HEK293T (cell line): ENCODE measurements at regions of chr1 and their contacts with region 1.

Region 1: GRCh38 chr1:45550401-45551351 is at the start of gene AKR1A1:
- DNase-seq: peak; percentile 90

Region 2: DNA sequence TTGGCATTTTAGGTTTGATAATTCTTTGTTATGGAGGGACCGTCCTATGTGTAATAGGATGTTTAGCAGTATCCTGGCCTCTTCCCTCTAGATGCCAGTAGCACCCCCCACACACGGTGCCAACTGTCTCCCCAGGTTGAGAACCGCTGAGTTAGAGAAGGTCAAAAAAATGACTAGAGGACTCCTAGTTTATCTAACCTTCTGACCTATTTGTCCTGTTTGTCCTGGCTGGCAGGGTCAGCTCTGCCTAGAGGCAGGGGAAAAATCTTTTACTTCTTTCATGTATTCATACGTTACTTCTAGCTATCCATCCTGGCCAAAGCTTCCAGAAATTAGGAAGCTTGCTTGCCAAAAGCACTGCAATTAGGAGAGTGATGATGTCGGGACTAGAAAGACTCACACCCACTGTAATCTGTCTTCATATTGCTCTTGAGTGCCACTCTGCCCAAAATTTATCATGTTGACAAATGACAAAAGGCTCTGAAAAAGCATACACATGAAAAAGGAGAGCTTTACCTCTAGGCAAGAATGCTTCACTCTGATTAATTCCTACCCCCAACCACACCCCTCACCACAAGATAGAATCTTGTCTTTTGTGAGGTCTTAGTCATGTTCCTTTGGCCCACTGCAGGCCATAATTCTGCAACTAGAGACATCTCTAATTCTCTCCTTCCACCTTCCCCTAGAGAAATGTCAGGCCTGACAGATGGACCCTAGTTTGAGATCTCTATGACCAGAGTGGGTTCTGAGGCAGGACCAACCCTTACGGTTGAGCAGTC is 14.5 kb before region 1 on chr1:
- CTCF ChIA-PET with region 1: interaction called, 4 read pairs
- POLR2A ChIA-PET with region 1: interaction called, 14 read pairs
- DNase-seq: no peak

Region 3: GRCh38 chr1:45563843-45564242 is 13.2 kb after region 1 on chr1:
- CTCF ChIA-PET with region 1: interaction called, 7 read pairs
- POLR2A ChIA-PET with region 1: interaction called, 15 read pairs
- DNase-seq: no peak

Region 4: DNA sequence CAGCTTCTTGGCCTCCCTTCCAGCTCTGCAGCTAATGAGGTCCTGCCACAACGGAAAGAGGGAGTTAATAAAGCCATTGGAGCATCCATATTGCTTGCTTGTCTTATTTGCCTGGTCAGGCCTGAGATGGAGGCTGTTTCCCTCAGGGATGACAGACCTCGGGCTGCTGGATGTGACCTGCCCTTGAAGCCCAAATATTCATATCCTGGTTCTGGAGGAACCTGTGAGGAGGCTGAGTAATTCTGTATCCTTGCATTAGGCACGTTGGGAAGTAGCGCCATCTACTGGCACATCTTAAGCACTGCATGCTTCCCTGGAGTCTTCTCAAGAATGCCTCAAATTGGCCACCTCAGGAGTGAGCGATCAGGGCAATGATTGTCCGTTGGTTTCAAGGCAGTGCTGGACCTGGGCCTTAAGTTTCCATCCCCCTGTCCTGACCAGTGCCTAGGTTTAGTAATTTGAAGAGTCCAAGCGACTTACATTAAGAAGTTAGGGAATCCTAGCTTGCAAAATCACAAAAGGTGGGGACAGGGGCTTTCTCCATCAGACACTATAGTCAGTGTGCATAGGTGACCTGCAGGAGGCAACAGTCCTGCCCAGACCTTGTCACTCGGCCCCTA is 19.4 kb after region 1 on chr1:
- CTCF ChIA-PET with region 1: interaction called, 7 read pairs
- POLR2A ChIA-PET with region 1: interaction called, 15 read pairs
- DNase-seq: peak; percentile 78